Activated CD4-positive, alpha-beta T cell treated with anti-CD3 and anti-CD28 coated beads for 36 hours (primary cell): ENCODE measurements at regions of chr22 and their contacts with region 1.

Region 1: DNA sequence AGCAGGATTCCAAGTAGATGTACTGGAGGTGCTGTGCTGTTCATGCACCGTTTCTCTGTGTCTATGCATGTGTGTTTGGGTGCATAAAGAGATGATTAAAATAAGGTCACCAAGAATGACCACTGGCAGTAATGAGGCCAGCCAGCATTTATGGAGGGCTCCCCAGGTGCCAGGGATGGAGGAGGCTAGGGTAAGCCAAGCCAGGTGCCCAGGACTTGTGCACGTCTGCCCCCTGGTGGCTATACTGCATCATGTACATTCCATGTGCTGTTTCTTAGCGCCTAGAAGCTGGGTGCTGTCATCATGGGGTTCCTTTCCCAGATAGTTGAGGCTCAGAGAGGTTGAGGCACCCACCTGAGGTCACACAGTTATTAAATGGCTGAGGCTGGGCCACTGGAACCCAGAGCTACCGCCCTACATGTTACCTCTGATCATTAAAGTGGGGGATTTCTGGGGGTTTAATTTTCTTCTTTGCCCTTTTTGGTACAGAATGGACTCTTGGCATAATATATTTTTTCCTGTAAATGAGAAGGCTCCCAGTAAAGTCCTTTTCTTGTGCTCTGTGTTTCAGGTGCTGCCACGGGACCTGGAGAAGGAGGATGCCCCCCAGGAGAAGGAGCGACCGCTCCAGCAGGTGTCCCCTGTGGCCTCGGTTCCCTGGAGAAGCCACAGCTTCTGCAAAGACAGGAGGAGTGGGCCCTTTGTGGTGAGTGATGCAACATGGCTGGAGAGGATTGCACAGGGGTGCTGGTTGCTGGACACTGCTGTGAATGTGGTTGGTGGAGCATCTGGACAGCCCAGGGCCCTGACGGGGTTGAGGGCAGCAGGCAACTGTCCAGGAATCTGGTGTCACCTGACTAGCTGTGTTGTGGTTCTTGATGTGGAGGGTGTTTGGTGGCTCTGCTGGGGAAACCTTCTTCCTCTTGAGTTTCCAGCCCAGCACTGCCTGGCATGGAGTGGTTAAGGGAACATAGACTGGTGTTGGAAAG is 96.4 kb downstream of the KIAA1671 start:
- DNase-seq: peak; percentile 86
- ATAC-seq: peak; percentile 97
- H3K4me3 Mint-ChIP-seq: no peak overlapping the region
- H3K27ac Mint-ChIP-seq: no peak overlapping the region
- H3K4me1 Mint-ChIP-seq: peaks cover 5% of the 10 kb centered on the region
- H3K27me3 Mint-ChIP-seq: peaks cover 2% of the 10 kb centered on the region

Region 2: DNA sequence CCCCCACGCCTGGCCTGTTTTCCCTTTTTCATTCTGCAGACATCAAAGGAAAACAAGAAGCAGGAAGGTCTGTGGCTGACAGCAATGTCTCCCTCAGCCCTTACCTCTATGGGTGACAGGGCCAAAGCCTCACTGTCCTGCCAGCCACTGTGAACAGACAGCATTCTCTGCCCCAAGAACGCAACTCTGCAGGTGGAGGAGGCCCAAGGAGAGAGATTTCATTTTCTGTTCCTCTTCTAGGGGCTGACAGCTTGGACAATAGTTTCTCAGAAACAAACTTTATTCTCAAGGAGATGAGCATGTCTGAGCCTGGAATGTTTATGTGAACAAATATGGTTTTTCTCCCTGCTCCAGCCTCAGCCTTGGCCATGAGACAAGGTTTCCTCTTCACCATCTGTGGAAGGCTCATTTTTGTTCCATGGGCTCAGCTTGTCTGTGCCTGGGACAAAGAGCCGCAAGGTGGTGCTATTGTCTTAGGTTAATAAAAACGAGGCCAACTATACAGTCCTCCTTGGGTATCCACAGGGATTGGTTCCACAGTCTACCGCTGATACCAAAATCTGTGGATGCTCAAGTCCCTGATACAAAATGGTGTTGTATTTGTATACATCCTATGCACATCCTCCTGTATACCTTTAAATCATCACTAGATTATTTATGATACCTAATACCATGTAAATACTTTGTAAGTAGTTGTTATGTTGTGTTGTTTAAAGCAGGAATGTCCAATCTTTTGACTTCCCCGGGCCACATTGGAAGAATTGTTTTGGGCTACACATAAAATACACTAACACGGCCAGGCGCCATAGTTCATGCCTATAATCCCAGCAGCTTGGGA is 280.2 kb before region 1 on chr22:
- CTCF ChIA-PET with region 1: interaction called, 4 read pairs
- POLR2A ChIA-PET with region 1: no interaction called
- intact Hi-C with region 1: loop called in 1 of 2 experiments (anchors 2 kb)
- DNase-seq: peak; percentile 72
- ATAC-seq: peak; percentile 75
- H3K4me3 Mint-ChIP-seq: no peak overlapping the region
- H3K27ac Mint-ChIP-seq: no peak overlapping the region
- H3K4me1 Mint-ChIP-seq: no peaks in the 10 kb centered on the region
- H3K27me3 Mint-ChIP-seq: peaks cover 2% of the 10 kb centered on the region

Region 3: GRCh38 chr22:24938741-24939341 is 110.1 kb before region 1 on chr22:
- CTCF ChIA-PET with region 1: interaction called, 50 read pairs
- POLR2A ChIA-PET with region 1: no interaction called
- intact Hi-C with region 1: loop called (anchors 1 kb)
- DNase-seq: peak; percentile 38
- ATAC-seq: peak; percentile 55
- H3K4me3 Mint-ChIP-seq: no peak overlapping the region
- H3K27ac Mint-ChIP-seq: no peak overlapping the region
- H3K4me1 Mint-ChIP-seq: no peaks in the 10 kb centered on the region
- H3K27me3 Mint-ChIP-seq: peaks cover 4% of the 10 kb centered on the region

Region 4: DNA sequence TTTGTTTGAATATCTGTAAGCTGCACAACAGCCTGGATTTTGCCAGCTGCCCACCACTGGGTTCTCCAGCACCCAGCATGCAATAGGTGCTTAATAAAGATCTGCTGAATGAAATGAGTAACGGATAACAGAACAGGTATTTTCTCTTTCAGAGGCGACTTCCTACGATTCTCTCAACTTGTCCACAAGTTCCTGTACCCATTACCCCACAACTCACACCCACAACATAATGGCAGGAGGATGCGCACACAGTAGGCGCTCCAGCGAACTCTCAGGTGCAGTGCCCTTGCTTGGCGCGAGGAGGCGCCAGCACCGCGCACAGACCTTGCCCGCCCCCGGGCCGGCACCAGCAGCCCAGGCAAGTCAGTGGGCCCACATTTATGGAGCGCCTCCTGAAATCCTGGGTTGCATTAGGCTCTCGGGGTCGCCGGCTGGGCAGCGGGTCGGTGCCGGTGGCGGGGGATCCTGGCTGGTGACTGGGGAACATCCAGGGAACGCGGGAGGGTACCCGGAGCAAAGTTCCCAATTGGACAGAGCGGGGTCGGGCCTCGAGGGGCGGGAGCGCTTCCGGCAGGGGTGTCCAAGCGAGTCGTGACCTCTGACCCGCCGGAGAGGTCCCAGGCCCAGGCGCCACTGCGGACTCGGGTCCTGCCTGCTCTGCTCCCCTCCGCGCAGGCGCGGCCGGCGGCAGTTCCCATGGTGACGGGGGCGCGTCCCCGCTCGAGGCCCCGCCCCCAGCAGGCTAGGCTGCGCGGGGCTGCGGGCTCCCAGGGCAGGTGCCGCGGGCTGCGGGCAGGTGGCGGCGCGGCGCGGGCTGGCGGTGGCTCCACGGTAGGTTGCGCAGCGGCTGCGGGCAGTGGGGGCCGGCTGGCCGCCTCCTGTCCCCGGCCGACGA is 96.8 kb before region 1 on chr22 and contains the start of gene KIAA1671:
- CTCF ChIA-PET with region 1: interaction called, 79 read pairs
- POLR2A ChIA-PET with region 1: no interaction called
- intact Hi-C with region 1: loop called (anchors 1 kb)
- DNase-seq: peak; percentile 91
- ATAC-seq: peak; percentile 97
- H3K4me3 Mint-ChIP-seq: peak within 1 kb of the TSS; percentile 75
- H3K27ac Mint-ChIP-seq: no peak within 1 kb of the TSS
- H3K4me1 Mint-ChIP-seq: peaks cover 10% of the 10 kb centered on the region
- H3K27me3 Mint-ChIP-seq: peaks cover 47% of the 10 kb centered on the region
- total RNA-seq, gene KIAA1671: 12.3 to 14.0 TPM

Region 5: DNA sequence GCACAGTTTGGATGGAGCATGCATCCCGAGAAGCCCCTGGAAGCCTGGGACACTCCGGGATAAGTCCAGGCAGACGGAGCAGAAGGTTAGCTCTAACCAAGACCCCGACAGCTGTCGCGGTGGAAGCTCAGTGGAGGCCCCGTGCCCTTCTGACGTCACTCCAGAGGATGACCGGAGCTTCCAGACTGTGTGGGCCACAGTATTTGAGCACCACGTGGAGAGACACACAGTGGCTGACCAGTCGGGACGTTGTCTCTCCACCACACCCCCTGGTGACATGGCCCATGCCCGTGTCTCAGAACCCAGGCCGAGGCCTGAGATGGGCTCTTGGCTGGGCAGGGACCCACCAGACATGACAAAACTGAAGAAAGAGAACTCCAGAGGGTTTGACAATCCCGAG is 10.2 kb before region 1 on chr22:
- CTCF ChIA-PET with region 1: no interaction called
- POLR2A ChIA-PET with region 1: no interaction called
- intact Hi-C with region 1: no loop called
- DNase-seq: no peak
- ATAC-seq: no peak
- H3K4me3 Mint-ChIP-seq: no peak overlapping the region
- H3K27ac Mint-ChIP-seq: no peak overlapping the region
- H3K4me1 Mint-ChIP-seq: no peaks in the 10 kb centered on the region
- H3K27me3 Mint-ChIP-seq: peaks cover 3% of the 10 kb centered on the region

Region 6: GRCh38 chr22:25076336-25076735 is 27.4 kb after region 1 on chr22:
- CTCF ChIA-PET with region 1: interaction called, 46 read pairs
- POLR2A ChIA-PET with region 1: no interaction called
- intact Hi-C with region 1: loop called in 1 of 2 experiments (anchors 2 kb)
- DNase-seq: peak; percentile 85
- ATAC-seq: peak; percentile 76
- H3K4me3 Mint-ChIP-seq: peak overlapping the region; percentile 34
- H3K27ac Mint-ChIP-seq: peak overlapping the region; percentile 83
- H3K4me1 Mint-ChIP-seq: peaks cover 86% of the 10 kb centered on the region
- H3K27me3 Mint-ChIP-seq: no peaks in the 10 kb centered on the region

Region 7: GRCh38 chr22:25488244-25489020 is 439.5 kb after region 1 on chr22:
- CTCF ChIA-PET with region 1: no interaction called
- POLR2A ChIA-PET with region 1: no interaction called
- intact Hi-C with region 1: no loop called
- DNase-seq: peak; percentile 80
- ATAC-seq: peak; percentile 43
- H3K4me3 Mint-ChIP-seq: no peak overlapping the region
- H3K27ac Mint-ChIP-seq: no peak overlapping the region
- H3K4me1 Mint-ChIP-seq: peaks cover 47% of the 10 kb centered on the region
- H3K27me3 Mint-ChIP-seq: peaks cover 2% of the 10 kb centered on the region